ENCODE measurements at regions of chr12 and their contacts with region 1.

Region 1: DNA sequence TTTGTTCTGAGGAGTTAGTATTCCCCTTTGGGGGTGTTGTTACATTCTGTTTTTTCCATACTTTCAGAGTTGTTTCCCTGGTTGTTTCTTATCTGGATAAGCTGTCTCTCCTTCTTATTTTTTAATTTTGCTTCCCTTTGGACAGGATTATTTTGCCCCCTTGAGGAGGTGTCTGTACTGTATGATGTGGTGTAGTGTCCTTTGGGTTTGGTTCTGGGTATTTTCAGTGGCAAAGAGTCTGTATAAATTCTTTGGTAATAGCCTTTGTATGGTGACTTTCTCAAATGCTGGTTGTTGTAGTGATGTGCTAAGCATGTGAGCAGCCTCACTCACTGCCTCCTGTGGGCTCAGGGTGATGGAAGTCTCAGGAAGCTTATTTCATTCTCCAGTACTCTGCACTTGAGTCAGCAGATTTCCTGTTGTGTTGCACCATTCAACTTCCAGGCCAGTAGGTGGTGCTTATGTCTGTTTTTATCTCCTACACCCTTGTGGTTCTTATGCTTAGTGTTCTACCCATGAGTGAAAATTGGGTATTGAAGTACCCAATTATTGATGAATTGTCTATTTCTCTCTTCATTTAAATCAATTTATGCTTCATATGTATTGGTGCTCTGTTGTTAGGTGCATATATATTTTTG is 103.3 kb upstream of the PMCH start:
- DNase-seq: peak; percentile 28
- H3K4me3 Mint-ChIP-seq: no peak overlapping the region
- H3K27ac Mint-ChIP-seq: no peak overlapping the region
- H3K4me1 Mint-ChIP-seq: peaks cover 21% of the 10 kb centered on the region
- H3K27me3 Mint-ChIP-seq: peaks cover 9% of the 10 kb centered on the region

Region 2: GRCh38 chr12:102095675-102096263 is 205.2 kb before region 1 on chr12:
- intact Hi-C with region 1: loop called (anchors 5 kb)
- DNase-seq: no peak
- H3K4me3 Mint-ChIP-seq: no peak overlapping the region
- H3K27ac Mint-ChIP-seq: no peak overlapping the region
- H3K4me1 Mint-ChIP-seq: peaks cover 16% of the 10 kb centered on the region
- H3K27me3 Mint-ChIP-seq: no peaks in the 10 kb centered on the region

Region 3: DNA sequence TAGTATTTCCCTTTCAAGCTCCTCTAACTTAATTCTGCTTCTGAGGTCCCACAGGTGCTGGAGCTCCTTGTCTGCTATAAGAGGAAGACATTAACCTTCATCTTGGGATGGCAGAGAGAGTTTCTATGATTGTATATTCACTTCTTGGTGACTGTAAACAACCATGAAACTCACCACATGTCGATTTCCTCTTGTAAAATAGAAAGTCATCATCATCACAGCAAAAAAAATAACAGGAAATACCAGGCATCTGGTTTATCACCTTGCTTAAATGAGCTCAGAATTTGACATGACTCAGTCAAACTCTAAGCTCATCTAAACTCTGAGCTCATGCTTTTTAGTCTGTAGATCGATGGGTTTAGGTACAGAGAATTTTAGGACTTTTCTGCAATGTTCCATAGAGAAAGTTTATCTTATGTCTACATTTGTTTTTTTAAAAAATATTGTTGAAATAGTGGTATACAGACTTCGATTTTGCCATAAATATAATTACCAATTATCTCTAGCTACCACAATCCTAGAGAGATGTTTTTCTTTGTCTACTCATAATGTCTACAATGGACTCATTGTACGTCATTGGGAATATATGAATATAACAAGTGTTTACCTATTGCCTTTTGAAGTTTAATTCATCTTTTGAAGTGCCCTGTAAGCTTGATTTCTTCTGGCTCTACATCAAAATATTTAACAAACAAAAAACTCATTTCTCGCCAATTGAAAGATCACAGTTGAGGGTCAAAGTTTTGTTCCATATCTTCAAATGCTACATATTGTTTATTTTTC is 121.0 kb after region 1 on chr12:
- intact Hi-C with region 1: loop called (anchors 2 kb)
- DNase-seq: no peak
- H3K4me3 Mint-ChIP-seq: no peak overlapping the region
- H3K27ac Mint-ChIP-seq: peak overlapping the region; percentile 78
- H3K4me1 Mint-ChIP-seq: peaks cover 15% of the 10 kb centered on the region
- H3K27me3 Mint-ChIP-seq: peaks cover 6% of the 10 kb centered on the region

Region 4: GRCh38 chr12:102702447-102703114 is 401.6 kb after region 1 on chr12:
- intact Hi-C with region 1: loop called (anchors 1 kb)
- DNase-seq: peak; percentile 9
- H3K4me3 Mint-ChIP-seq: no peak overlapping the region
- H3K27ac Mint-ChIP-seq: no peak overlapping the region
- H3K4me1 Mint-ChIP-seq: no peaks in the 10 kb centered on the region
- H3K27me3 Mint-ChIP-seq: peaks cover 10% of the 10 kb centered on the region

Region 5: DNA sequence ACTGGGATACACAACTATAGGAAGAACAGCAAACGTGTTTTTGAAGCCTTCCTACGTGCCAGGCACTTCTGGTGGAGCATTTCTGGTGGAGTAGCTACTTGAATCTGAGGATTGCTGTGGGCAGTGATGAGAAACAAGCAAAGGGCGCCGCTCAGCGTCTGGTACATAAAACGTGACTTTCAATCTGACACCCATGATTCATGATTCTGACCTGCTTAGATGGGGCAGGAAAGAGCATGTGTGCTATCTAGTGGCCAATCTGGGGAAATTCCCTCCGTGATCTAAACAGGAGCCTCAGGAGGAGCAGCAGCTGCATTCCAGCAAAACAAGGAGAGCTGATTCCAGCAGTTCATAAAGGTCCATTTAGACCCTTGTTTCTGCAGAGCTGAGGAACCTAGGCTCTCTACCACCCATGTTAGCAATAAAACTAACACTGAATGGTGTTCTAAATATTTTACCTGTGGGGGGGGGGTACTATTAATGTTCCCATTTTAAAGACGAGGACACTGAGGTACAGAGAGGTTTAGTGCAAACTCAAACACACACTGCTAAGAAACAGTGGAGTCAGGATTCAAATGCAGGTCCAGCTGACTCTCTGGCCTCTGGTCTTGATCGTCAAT is 578.3 kb after region 1 on chr12:
- intact Hi-C with region 1: loop called (anchors 2 kb)
- DNase-seq: no peak
- H3K4me3 Mint-ChIP-seq: no peak overlapping the region
- H3K27ac Mint-ChIP-seq: no peak overlapping the region
- H3K4me1 Mint-ChIP-seq: peaks cover 5% of the 10 kb centered on the region
- H3K27me3 Mint-ChIP-seq: peaks cover 4% of the 10 kb centered on the region